ENCODE measurements at regions of chr13 and their contacts with region 1.

Region 1: GRCh38 chr13:109036078-109036780 is 406.8 kb downstream of the MYO16 start:
- DNase-seq: no peak
- ATAC-seq: no peak
- H3K4me3 ChIP-seq: no peak overlapping the region
- H3K4me3 Mint-ChIP-seq: no peak overlapping the region
- H3K27ac ChIP-seq: no peak overlapping the region
- H3K27ac Mint-ChIP-seq: no peak overlapping the region
- H3K4me1 ChIP-seq: no peaks in the 10 kb centered on the region
- H3K4me1 Mint-ChIP-seq: no peaks in the 10 kb centered on the region
- H3K27me3 ChIP-seq: peaks cover 0 to 2% of the 10 kb centered on the region in 2 experiments
- H3K27me3 Mint-ChIP-seq: peaks cover 5% of the 10 kb centered on the region
- CTCF ChIP-seq: no peak

Region 2: DNA sequence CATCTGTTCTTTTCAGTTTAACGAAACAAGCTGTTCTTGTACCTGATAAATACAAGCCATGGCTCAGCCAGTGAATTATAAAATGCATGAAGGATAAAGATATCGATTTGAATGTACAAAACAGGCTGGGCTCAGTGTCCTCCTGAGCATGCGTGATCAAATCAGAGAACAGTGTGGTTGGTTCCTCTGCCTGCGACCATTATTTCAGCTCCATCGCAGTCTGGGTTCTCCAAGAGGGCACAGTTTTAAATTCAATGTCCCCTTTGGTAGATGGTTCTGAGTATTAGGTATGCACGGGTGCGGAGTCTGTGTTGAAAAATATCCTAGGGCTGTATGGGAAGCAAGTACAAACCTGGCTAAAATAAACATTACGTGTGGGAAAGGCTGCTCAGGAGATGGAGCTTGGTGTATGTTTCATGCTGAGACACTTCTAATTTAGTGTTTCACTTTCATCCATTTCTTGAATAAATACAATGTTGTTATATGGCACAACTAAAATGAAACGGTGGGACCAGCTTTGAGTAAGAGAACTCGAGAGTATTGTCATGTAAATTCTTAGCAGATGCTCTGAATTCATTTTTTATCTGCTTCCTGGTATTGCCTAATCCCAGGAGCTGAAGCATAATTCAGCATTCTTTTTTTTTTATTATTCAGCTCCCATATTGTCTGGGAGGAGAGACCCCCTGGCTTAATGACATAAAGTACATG is 51.8 kb after region 1 on chr13:
- CTCF ChIA-PET with region 1: no interaction called
- POLR2A ChIA-PET with region 1: no interaction called
- intact Hi-C with region 1: loop called in 1 of 2 experiments (anchors 5 kb)
- DNase-seq: no peak
- ATAC-seq: no peak
- H3K4me3 ChIP-seq: no peak overlapping the region
- H3K4me3 Mint-ChIP-seq: no peak overlapping the region
- H3K27ac ChIP-seq: no peak overlapping the region
- H3K27ac Mint-ChIP-seq: no peak overlapping the region
- H3K4me1 ChIP-seq: no peaks in the 10 kb centered on the region
- H3K4me1 Mint-ChIP-seq: no peaks in the 10 kb centered on the region
- H3K27me3 ChIP-seq: no peaks in the 10 kb centered on the region
- H3K27me3 Mint-ChIP-seq: peaks cover 2% of the 10 kb centered on the region
- CTCF ChIP-seq: no peak

Measured in CD8-positive, alpha-beta T cell (primary cell).